ENCODE measurements at regions of chr5 and their contacts with region 1.

Region 1: GRCh38 chr5:151078490-151079262 is 2.2 kb downstream of the TNIP1 start:
- DNase-seq: no peak

Region 2: GRCh38 chr5:149337736-149338135 is 1740.9 kb before region 1 on chr5:
- intact Hi-C with region 1: loop called in 1 of 2 experiments (anchors 5 kb)
- DNase-seq: no peak

Region 3: GRCh38 chr5:150560401-150561193 is 518.1 kb before region 1 on chr5:
- intact Hi-C with region 1: no loop called
- DNase-seq: no peak